PC-9 (cell line): ENCODE measurements at regions of chr18 and their contacts with region 1.

Region 1: DNA sequence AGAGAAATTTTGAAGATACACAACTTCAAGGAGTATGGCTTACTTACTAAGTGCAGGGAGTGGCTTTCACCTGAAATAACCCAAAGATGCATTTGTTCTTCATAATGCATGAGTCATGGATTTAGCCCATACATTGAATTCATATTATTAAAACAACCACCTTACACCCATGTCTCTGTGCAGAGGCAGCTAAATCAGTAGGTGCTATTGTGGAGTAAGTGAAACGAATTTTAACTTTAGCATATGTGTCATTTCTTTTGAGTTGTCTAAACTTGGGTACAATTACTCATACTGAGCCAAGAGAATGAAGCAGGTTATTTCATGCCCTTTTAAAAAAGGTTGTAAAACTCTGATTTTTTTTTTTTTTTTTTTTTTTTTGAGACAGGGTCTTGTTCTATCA is 11.0 kb upstream of the ANKRD29 start:
- DNase-seq: no peak
- H3K4me3 ChIP-seq: no peak overlapping the region
- H3K27ac ChIP-seq: no peak overlapping the region
- H3K4me1 ChIP-seq: 0 out of 2 replicates have a peak, but pooled peaks cover 5% of the 10 kb centered on the region
- H3K27me3 ChIP-seq: no peaks in the 10 kb centered on the region
- CTCF ChIP-seq: no peak

Region 2: GRCh38 chr18:23635283-23636070 is 38.2 kb before region 1 on chr18:
- CTCF ChIA-PET with region 1: no interaction called
- POLR2A ChIA-PET with region 1: interaction called, 15 read pairs
- intact Hi-C with region 1: no loop called
- DNase-seq: peak; percentile 21 to 70
- H3K4me3 ChIP-seq: 0 out of 2 replicates have a peak overlapping the region, but pooled peaks have one; percentile 16
- H3K27ac ChIP-seq: peak overlapping the region; percentile 96
- H3K4me1 ChIP-seq: peaks cover 26% of the 10 kb centered on the region
- H3K27me3 ChIP-seq: no peaks in the 10 kb centered on the region
- CTCF ChIP-seq: no peak

Region 3: DNA sequence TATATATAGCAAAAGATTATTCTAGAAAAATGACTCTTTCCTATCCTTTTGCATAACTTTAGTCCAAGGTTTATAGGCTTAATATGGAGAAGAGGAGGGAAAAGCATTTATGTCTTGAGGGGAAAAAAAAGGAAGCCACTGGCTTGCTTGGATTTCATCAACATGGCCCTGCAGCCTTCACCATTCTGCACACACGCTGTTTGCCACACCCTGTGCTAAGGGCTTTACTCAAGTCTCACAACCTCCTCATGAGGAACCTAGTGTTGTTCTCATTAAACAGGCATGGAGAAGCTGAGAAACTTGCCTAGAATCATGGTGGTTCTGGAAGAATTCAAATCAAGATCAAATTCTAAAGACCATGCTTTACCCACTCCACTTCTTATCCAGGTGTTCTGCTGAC is 223.6 kb after region 1 on chr18:
- CTCF ChIA-PET with region 1: no interaction called
- POLR2A ChIA-PET with region 1: interaction called, 24 read pairs
- intact Hi-C with region 1: no loop called
- DNase-seq: no peak
- H3K4me3 ChIP-seq: no peak overlapping the region
- H3K27ac ChIP-seq: no peak overlapping the region
- H3K4me1 ChIP-seq: no peaks in the 10 kb centered on the region
- H3K27me3 ChIP-seq: no peaks in the 10 kb centered on the region
- CTCF ChIP-seq: no peak